CD4-positive, alpha-beta T cell (primary cell): ENCODE measurements at regions of chr15 and their contacts with region 1.

Region 1: DNA sequence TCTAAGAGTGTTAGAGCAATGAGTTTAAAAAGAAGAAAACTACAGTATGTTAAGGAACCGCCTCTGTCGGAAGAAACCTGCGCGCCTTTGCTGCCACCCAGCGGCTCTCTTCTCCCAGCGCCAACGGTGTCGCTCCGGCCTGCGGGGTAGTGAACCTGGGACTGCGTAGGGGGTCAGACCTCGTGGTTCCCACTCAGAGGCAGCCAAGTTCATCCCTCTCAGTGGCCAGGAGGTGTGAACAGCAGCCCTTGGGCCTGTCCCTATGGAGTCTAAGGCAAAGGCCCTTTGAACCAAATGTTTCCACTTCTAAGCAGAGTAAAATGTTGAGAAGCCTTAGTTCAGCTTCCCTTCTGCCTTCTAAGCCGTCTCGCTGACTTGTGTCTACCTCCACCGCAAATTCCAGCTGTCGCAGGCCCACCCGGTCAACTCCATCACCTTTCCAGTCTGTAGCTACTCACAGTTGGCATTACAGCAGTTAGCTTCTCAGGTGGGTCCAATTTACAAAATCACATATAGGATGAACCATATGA is 980 bp upstream of the RAB27A start:
- DNase-seq: peak; percentile 74 to 91 (median 82)
- ATAC-seq: peak; percentile 79
- H3K4me3 ChIP-seq: peak overlapping the region; percentile 88
- H3K4me3 Mint-ChIP-seq: peak overlapping the region; percentile 96
- H3K27ac ChIP-seq: peak overlapping the region; percentile 87 to 90
- H3K27ac Mint-ChIP-seq: peak overlapping the region; percentile 94
- H3K4me1 ChIP-seq: peaks cover 33% of the 10 kb centered on the region
- H3K4me1 Mint-ChIP-seq: peaks cover 32% of the 10 kb centered on the region
- H3K27me3 ChIP-seq: no peaks in the 10 kb centered on the region
- H3K27me3 Mint-ChIP-seq: no peaks in the 10 kb centered on the region
- CTCF ChIP-seq: peak; percentile 90

Region 2: DNA sequence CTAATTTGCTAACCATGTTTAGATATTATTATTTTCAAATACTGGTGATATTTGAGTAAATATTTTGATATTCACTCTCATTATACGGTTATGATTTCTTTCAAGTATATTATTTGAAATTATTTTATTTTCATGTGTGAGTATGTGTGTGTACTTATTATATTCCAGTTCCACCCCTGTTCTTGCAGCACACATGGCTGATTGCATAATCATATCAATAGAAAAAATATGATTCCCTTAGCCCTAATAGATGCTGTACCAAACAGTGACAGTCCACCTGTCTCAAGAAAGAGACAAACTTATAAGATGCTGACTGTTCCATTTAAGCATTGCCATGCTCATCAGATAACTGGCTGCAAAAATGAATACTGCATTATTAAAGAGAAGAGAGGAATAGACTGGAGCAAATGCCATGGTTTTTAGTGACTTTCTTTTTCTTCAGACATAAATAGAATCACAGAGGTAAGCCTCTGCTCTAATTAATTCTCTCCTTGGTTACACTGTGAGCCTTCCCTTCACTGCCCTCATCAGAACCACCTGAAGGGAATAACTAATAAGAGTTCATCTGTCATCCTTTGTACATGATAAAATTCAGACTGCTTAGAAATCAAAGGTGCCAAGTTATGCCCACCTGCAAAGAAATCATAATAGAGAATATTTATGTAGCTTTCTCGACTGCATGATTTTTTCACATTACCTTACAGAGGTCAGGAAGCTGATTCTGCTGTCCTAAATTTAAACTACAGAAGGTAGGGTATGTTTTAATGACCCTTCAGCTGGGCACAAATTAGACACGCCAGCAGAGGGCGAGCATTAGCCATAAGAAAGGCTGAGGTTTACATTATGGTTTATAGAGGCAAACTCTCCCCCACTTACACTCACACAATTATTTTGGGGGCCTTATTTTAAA is 1328.0 kb before region 1 on chr15:
- CTCF ChIA-PET with region 1: no interaction called
- POLR2A ChIA-PET with region 1: no interaction called
- intact Hi-C with region 1: loop called in 1 of 2 experiments (anchors 5 kb)
- DNase-seq: peak in 3 of 14 experiments; percentile 1 to 8 (median 2)
- ATAC-seq: no peak
- H3K4me3 ChIP-seq: no peak overlapping the region
- H3K4me3 Mint-ChIP-seq: no peak overlapping the region
- H3K27ac ChIP-seq: no peak overlapping the region
- H3K27ac Mint-ChIP-seq: no peak overlapping the region
- H3K4me1 ChIP-seq: no peaks in the 10 kb centered on the region
- H3K4me1 Mint-ChIP-seq: no peaks in the 10 kb centered on the region
- H3K27me3 ChIP-seq: no peaks in the 10 kb centered on the region
- H3K27me3 Mint-ChIP-seq: no peaks in the 10 kb centered on the region
- CTCF ChIP-seq: no peak

Region 3: GRCh38 chr15:55196458-55197361 is 93.9 kb before region 1 on chr15 and contains the start of gene RSL24D1:
- CTCF ChIA-PET with region 1: interaction called, 3 read pairs
- POLR2A ChIA-PET with region 1: interaction called, 4 read pairs
- intact Hi-C with region 1: loop called in 1 of 2 experiments (anchors 5 kb)
- DNase-seq: peak; percentile 91 to 100 (median 95)
- ATAC-seq: peak; percentile 96
- H3K4me3 ChIP-seq: peak within 1 kb of the TSS; percentile 89
- H3K4me3 Mint-ChIP-seq: no peak within 1 kb of the TSS
- H3K27ac ChIP-seq: peak within 1 kb of the TSS; percentile 79 to 92
- H3K27ac Mint-ChIP-seq: no peak within 1 kb of the TSS
- H3K4me1 ChIP-seq: peaks cover 18% of the 10 kb centered on the region
- H3K4me1 Mint-ChIP-seq: peaks cover 21% of the 10 kb centered on the region
- H3K27me3 ChIP-seq: no peaks in the 10 kb centered on the region
- H3K27me3 Mint-ChIP-seq: no peaks in the 10 kb centered on the region
- CTCF ChIP-seq: peak; percentile 55
- total RNA-seq, gene RSL24D1: 163 to 164 TPM

Region 4: DNA sequence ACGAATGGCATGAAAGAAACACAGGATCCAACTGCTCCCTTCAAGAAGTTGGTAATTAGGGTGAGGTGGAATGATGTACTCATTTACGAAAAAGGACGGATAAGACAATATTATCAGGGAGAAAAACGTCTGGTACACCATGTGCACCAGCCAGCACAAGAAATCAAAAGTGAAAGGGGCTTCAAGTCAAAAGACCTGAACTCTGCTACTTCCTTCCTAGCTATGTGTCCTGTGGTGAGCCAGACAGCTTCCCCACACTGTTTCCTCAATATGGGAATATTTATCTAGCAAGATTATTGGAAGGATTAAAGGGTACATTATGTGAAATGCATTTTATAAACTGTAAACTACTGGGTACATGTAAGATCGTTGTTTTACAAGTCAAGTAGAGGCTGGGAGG is 34.9 kb before region 1 on chr15:
- CTCF ChIA-PET with region 1: interaction called, 5 read pairs
- POLR2A ChIA-PET with region 1: no interaction called
- intact Hi-C with region 1: loop called in 1 of 2 experiments (anchors 5 kb)
- DNase-seq: peak in 3 of 14 experiments; percentile 50 to 73 (median 52)
- ATAC-seq: peak; percentile 69
- H3K4me3 ChIP-seq: peak overlapping the region; percentile 46
- H3K4me3 Mint-ChIP-seq: peak overlapping the region; percentile 82
- H3K27ac ChIP-seq: peak overlapping the region in 1 of 2 donors; percentile 47
- H3K27ac Mint-ChIP-seq: peak overlapping the region; percentile 57
- H3K4me1 ChIP-seq: peaks cover 41% of the 10 kb centered on the region
- H3K4me1 Mint-ChIP-seq: peaks cover 66% of the 10 kb centered on the region
- H3K27me3 ChIP-seq: no peaks in the 10 kb centered on the region
- H3K27me3 Mint-ChIP-seq: no peaks in the 10 kb centered on the region
- CTCF ChIP-seq: no peak

Region 5: GRCh38 chr15:55279746-55280351 is 10.7 kb before region 1 on chr15:
- CTCF ChIA-PET with region 1: interaction called, 3 read pairs
- POLR2A ChIA-PET with region 1: interaction called, 10 read pairs
- intact Hi-C with region 1: loop called in 1 of 2 experiments (anchors 1 kb)
- DNase-seq: peak in 12 of 14 experiments; percentile 23 to 85 (median 44)
- ATAC-seq: peak; percentile 65
- H3K4me3 ChIP-seq: no peak overlapping the region
- H3K4me3 Mint-ChIP-seq: peak overlapping the region; percentile 47
- H3K27ac ChIP-seq: peak overlapping the region; percentile 68 to 69
- H3K27ac Mint-ChIP-seq: peak overlapping the region; percentile 94
- H3K4me1 ChIP-seq: peaks cover 70% of the 10 kb centered on the region
- H3K4me1 Mint-ChIP-seq: peaks cover 93% of the 10 kb centered on the region
- H3K27me3 ChIP-seq: no peaks in the 10 kb centered on the region
- H3K27me3 Mint-ChIP-seq: no peaks in the 10 kb centered on the region
- CTCF ChIP-seq: no peak

Region 6: GRCh38 chr15:55434989-55435825 is 144.6 kb after region 1 on chr15:
- CTCF ChIA-PET with region 1: interaction called, 3 read pairs
- POLR2A ChIA-PET with region 1: no interaction called
- intact Hi-C with region 1: loop called in 1 of 2 experiments (anchors 2 kb)
- DNase-seq: peak in 4 of 14 experiments; percentile 19 to 66 (median 55)
- ATAC-seq: peak; percentile 62
- H3K4me3 ChIP-seq: no peak overlapping the region
- H3K4me3 Mint-ChIP-seq: no peak overlapping the region
- H3K27ac ChIP-seq: no peak overlapping the region
- H3K27ac Mint-ChIP-seq: no peak overlapping the region
- H3K4me1 ChIP-seq: no peaks in the 10 kb centered on the region
- H3K4me1 Mint-ChIP-seq: no peaks in the 10 kb centered on the region
- H3K27me3 ChIP-seq: no peaks in the 10 kb centered on the region
- H3K27me3 Mint-ChIP-seq: no peaks in the 10 kb centered on the region
- CTCF ChIP-seq: peak; percentile 67